ENCODE measurements at regions of chr4 and their contacts with region 1.

Region 1: GRCh38 chr4:153684182-153684970 is at the start of gene TLR2:
- DNase-seq: peak; percentile 77
- H3K4me3 Mint-ChIP-seq: peak within 1 kb of the TSS; percentile 70
- H3K27ac Mint-ChIP-seq: no peak within 1 kb of the TSS
- H3K4me1 Mint-ChIP-seq: peaks cover 11% of the 10 kb centered on the region
- H3K27me3 Mint-ChIP-seq: peaks cover 26% of the 10 kb centered on the region
- total RNA-seq, gene TLR2: 1.3 to 1.6 TPM

Region 2: DNA sequence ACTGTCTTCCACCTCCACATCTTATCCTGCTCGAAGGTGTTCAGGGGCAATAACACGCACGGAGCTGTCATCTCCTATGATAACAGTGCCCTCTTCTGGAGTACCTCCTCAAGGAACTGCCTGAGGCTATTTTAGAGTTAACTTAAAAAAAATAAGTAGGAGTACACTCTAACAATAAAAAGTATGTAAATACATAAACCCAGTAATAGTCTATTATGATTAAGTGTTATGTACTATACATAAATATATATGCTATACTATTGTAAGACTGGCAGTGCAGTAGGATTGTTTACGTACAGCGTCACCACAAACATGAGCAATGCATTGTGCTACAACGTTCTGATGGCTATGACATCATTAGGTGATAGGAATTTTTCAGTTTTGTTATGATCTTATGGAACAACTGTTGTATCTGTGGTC is 34.8 kb before region 1 on chr4:
- CTCF ChIA-PET with region 1: no interaction called
- POLR2A ChIA-PET with region 1: no interaction called
- intact Hi-C with region 1: loop called (anchors 2 kb)
- DNase-seq: no peak
- H3K4me3 Mint-ChIP-seq: no peak overlapping the region
- H3K27ac Mint-ChIP-seq: no peak overlapping the region
- H3K4me1 Mint-ChIP-seq: peaks cover 36% of the 10 kb centered on the region
- H3K27me3 Mint-ChIP-seq: no peaks in the 10 kb centered on the region

Region 3: GRCh38 chr4:153668647-153669046 is 15.7 kb before region 1 on chr4:
- CTCF ChIA-PET with region 1: no interaction called
- POLR2A ChIA-PET with region 1: no interaction called
- intact Hi-C with region 1: no loop called
- DNase-seq: no peak
- H3K4me3 Mint-ChIP-seq: no peak overlapping the region
- H3K27ac Mint-ChIP-seq: no peak overlapping the region
- H3K4me1 Mint-ChIP-seq: no peaks in the 10 kb centered on the region
- H3K27me3 Mint-ChIP-seq: no peaks in the 10 kb centered on the region